Activated CD8-positive, alpha-beta T cell treated with anti-CD3 and anti-CD28 coated beads for 36 hours (primary cell): ENCODE measurements at regions of chr14 and their contacts with region 1.

Region 1: GRCh38 chr14:53295985-53296582 is 143.0 kb upstream of the DDHD1 start:
- DNase-seq: peak; percentile 13
- ATAC-seq: no peak
- H3K4me3 Mint-ChIP-seq: no peak overlapping the region
- H3K27ac Mint-ChIP-seq: no peak overlapping the region
- H3K4me1 Mint-ChIP-seq: no peaks in the 10 kb centered on the region
- H3K27me3 Mint-ChIP-seq: no peaks in the 10 kb centered on the region
- CTCF ChIP-seq: peak; percentile 80

Region 2: DNA sequence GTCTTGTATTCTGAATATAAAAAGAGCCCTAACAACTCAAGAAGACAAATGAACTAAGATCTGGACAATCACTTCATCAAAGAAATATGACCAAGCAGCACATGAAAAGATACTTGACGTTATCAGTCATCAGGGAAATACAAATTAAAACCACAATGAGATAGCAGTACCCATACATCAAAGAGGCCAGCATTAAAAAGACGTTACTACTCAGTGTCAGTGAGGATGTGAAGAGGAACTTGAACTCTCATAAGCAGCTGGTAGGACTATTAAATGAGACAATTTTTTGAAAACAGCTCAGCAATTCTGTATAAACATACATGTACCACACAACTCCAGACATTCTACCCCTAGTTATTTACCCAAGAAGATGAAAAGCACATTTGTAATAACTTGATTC is 401.1 kb before region 1 on chr14:
- CTCF ChIA-PET with region 1: no interaction called
- POLR2A ChIA-PET with region 1: no interaction called
- intact Hi-C with region 1: no loop called
- DNase-seq: no peak
- ATAC-seq: peak; percentile 37
- H3K4me3 Mint-ChIP-seq: no peak overlapping the region
- H3K27ac Mint-ChIP-seq: no peak overlapping the region
- H3K4me1 Mint-ChIP-seq: peaks cover 4% of the 10 kb centered on the region
- H3K27me3 Mint-ChIP-seq: no peaks in the 10 kb centered on the region
- CTCF ChIP-seq: no peak

Region 3: DNA sequence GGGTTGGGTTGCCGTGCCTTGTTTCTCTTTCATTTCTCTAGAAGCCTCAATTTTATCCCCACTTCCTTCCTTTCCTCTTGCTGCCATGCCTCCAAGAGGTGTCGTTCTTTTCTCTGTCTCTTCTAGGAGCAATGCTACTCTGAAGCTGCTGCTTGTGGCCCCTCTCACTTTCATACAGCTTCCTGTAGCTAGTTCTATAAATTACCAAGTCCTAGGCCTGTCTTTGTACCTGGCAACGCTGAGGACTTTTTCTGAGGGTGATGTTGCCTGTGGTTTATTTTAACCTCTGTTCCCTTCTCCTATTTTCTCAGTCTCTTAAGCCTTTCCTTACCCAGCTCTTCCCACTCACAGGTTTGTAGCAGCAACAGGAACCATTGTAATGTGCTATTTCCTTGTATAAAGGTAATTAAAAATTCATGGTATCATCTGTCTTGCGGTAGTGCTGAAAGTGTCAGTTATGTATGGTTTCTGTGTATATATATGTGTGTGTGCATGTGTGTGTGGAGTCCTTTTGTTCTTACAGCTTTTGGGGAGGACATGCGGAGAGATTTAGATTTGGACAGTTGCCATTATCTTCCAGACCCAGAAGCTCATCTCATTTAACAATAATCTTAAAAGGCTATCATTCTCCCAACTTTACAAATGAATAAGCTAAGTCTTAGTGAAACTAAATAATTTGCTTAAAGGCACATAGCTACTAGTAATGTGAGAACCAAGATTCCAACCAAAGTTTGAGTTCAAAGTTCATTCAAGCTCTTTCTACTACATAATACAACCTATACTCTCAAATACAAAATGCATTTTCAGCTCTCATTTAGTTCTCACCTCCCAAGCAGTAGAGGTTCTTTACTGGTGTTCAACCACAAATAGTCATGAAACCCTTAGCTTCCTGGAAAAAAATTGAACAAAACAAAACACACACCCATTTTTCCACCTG is 186.7 kb before region 1 on chr14:
- CTCF ChIA-PET with region 1: interaction called, 10 read pairs
- POLR2A ChIA-PET with region 1: no interaction called
- intact Hi-C with region 1: no loop called
- DNase-seq: peak; percentile 84
- ATAC-seq: peak; percentile 86
- H3K4me3 Mint-ChIP-seq: no peak overlapping the region
- H3K27ac Mint-ChIP-seq: no peak overlapping the region
- H3K4me1 Mint-ChIP-seq: peaks cover 27% of the 10 kb centered on the region
- H3K27me3 Mint-ChIP-seq: no peaks in the 10 kb centered on the region
- CTCF ChIP-seq: no peak

Region 4: GRCh38 chr14:53152890-53153701 is 143.0 kb before region 1 on chr14 and contains the start of gene DDHD1:
- CTCF ChIA-PET with region 1: interaction called, 15 read pairs
- POLR2A ChIA-PET with region 1: no interaction called
- intact Hi-C with region 1: no loop called
- DNase-seq: peak; percentile 83
- ATAC-seq: peak; percentile 82
- H3K4me3 Mint-ChIP-seq: peak within 1 kb of the TSS; percentile 100
- H3K27ac Mint-ChIP-seq: peak within 1 kb of the TSS; percentile 99
- H3K4me1 Mint-ChIP-seq: peaks cover 36% of the 10 kb centered on the region
- H3K27me3 Mint-ChIP-seq: no peaks in the 10 kb centered on the region
- CTCF ChIP-seq: no peak
- total RNA-seq, gene DDHD1: 35.5 to 41.5 TPM

Region 5: DNA sequence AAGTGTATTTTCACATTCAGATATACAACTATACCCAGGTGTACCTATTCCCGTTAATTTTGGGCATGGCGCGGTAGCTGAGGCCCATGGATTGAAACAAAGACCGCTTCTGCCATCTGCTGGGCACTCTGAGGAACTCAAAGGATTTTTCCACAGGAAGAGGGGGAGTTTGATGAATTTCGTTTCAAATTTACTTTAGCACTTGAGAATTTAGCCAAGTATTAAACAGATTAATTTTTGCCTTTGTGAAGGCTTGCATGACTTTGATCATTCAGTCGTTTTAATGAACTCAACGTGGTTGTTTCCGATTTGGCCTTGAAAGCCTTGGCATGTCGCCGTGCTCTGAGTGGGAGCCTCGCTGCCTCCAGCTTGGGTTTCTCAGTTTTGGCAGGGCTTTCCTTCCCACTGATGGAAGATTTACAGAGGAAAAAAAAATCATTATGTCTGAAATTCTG is 10.2 kb after region 1 on chr14:
- CTCF ChIA-PET with region 1: interaction called, 68 read pairs
- POLR2A ChIA-PET with region 1: no interaction called
- intact Hi-C with region 1: no loop called
- DNase-seq: peak; percentile 45
- ATAC-seq: peak; percentile 60
- H3K4me3 Mint-ChIP-seq: peak overlapping the region; percentile 59
- H3K27ac Mint-ChIP-seq: no peak overlapping the region
- H3K4me1 Mint-ChIP-seq: peaks cover 11% of the 10 kb centered on the region
- H3K27me3 Mint-ChIP-seq: peaks cover 3% of the 10 kb centered on the region
- CTCF ChIP-seq: peak; percentile 76

Region 6: DNA sequence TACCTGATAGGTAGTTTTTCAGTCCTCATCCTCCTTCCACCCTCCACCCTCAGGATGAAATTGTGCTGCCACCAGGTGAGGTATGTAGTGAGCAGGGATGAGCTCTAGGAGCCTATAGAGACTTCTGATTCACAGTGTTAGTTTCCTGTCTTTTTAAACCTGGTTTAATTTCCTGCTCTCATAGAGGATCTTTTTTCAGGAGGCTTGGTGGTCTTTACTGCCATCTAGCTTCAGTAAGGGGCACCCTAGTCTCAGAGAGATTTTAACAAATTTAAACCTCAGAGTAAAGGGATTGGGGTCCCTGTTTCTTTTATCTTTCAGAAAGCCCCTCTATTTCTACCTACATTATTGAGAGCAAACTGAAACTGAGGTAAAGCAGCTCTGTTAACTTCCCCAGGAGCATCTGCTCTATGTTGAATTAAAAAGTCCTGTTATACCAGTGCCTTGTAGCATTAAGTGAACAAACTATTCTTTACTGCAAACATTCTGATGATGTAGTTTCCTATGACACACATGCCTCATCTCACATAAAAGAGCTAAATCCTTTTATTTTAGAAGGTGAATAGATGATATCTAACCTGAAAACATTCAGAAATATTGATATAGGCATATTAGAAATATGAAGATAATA is 29.2 kb after region 1 on chr14:
- CTCF ChIA-PET with region 1: interaction called, 10 read pairs
- POLR2A ChIA-PET with region 1: no interaction called
- intact Hi-C with region 1: no loop called
- DNase-seq: no peak
- ATAC-seq: peak; percentile 47
- H3K4me3 Mint-ChIP-seq: no peak overlapping the region
- H3K27ac Mint-ChIP-seq: no peak overlapping the region
- H3K4me1 Mint-ChIP-seq: peaks cover 2% of the 10 kb centered on the region
- H3K27me3 Mint-ChIP-seq: no peaks in the 10 kb centered on the region
- CTCF ChIP-seq: peak; percentile 13

Region 7: DNA sequence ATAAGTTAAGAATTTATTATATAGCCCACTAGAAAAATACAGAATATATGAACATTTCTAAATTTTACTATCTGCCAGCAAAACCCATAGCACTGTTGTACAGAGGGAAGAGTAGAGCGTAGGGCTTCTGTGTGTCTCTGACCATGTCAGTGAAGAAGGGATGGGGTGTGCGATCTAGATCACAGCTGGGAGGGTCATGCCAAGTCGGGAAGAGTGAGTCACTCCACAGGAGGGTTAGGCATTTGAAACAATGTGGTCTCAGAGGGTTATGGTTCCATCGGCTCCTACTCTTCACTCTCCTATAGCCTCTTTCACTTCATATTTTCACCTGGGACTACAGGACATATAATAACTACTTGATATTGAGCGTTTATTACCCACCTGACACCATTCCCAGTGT is 42.1 kb after region 1 on chr14:
- CTCF ChIA-PET with region 1: no interaction called
- POLR2A ChIA-PET with region 1: no interaction called
- intact Hi-C with region 1: no loop called
- DNase-seq: no peak
- ATAC-seq: no peak
- H3K4me3 Mint-ChIP-seq: no peak overlapping the region
- H3K27ac Mint-ChIP-seq: no peak overlapping the region
- H3K4me1 Mint-ChIP-seq: no peaks in the 10 kb centered on the region
- H3K27me3 Mint-ChIP-seq: no peaks in the 10 kb centered on the region
- CTCF ChIP-seq: no peak

Region 8: GRCh38 chr14:53355581-53356112 is 59.6 kb after region 1 on chr14:
- CTCF ChIA-PET with region 1: interaction called, 12 read pairs
- POLR2A ChIA-PET with region 1: no interaction called
- intact Hi-C with region 1: no loop called
- DNase-seq: no peak
- ATAC-seq: no peak
- H3K4me3 Mint-ChIP-seq: no peak overlapping the region
- H3K27ac Mint-ChIP-seq: no peak overlapping the region
- H3K4me1 Mint-ChIP-seq: peaks cover 2% of the 10 kb centered on the region
- H3K27me3 Mint-ChIP-seq: no peaks in the 10 kb centered on the region
- CTCF ChIP-seq: no peak